CD4-positive, alpha-beta T cell (primary cell): ENCODE measurements at regions of chr11 and their contacts with region 1.

Region 1: GRCh38 chr11:9265211-9266131 is at the start of gene DENND5A:
- DNase-seq: peak; percentile 18 to 82 (median 50)
- ATAC-seq: peak; percentile 52
- H3K4me3 ChIP-seq: peak within 1 kb of the TSS; percentile 91
- H3K4me3 Mint-ChIP-seq: peak within 1 kb of the TSS; percentile 98
- H3K27ac ChIP-seq: peak within 1 kb of the TSS; percentile 77
- H3K27ac Mint-ChIP-seq: peak within 1 kb of the TSS; percentile 95
- H3K4me1 ChIP-seq: peaks cover 32% of the 10 kb centered on the region
- H3K4me1 Mint-ChIP-seq: peaks cover 35% of the 10 kb centered on the region
- H3K27me3 ChIP-seq: no peaks in the 10 kb centered on the region
- H3K27me3 Mint-ChIP-seq: no peaks in the 10 kb centered on the region
- CTCF ChIP-seq: no peak
- total RNA-seq, gene DENND5A: 101 to 103 TPM

Region 2: GRCh38 chr11:9203691-9204311 is 61.7 kb before region 1 on chr11:
- CTCF ChIA-PET with region 1: no interaction called
- POLR2A ChIA-PET with region 1: no interaction called
- intact Hi-C with region 1: loop called in 1 of 2 experiments (anchors 5 kb)
- DNase-seq: peak in 9 of 14 experiments; percentile 1 to 59 (median 9)
- ATAC-seq: peak; percentile 77
- H3K4me3 ChIP-seq: no peak overlapping the region
- H3K4me3 Mint-ChIP-seq: no peak overlapping the region
- H3K27ac ChIP-seq: no peak overlapping the region
- H3K27ac Mint-ChIP-seq: no peak overlapping the region
- H3K4me1 ChIP-seq: no peaks in the 10 kb centered on the region
- H3K4me1 Mint-ChIP-seq: peaks cover 26% of the 10 kb centered on the region
- H3K27me3 ChIP-seq: no peaks in the 10 kb centered on the region
- H3K27me3 Mint-ChIP-seq: no peaks in the 10 kb centered on the region
- CTCF ChIP-seq: peak; percentile 49

Region 3: GRCh38 chr11:9210922-9211320 is 54.5 kb before region 1 on chr11:
- CTCF ChIA-PET with region 1: no interaction called
- POLR2A ChIA-PET with region 1: no interaction called
- intact Hi-C with region 1: loop called (anchors 5 kb)
- DNase-seq: peak in 2 of 14 experiments; percentile 28 to 33
- ATAC-seq: no peak
- H3K4me3 ChIP-seq: no peak overlapping the region
- H3K4me3 Mint-ChIP-seq: no peak overlapping the region
- H3K27ac ChIP-seq: no peak overlapping the region
- H3K27ac Mint-ChIP-seq: no peak overlapping the region
- H3K4me1 ChIP-seq: peaks cover 13% of the 10 kb centered on the region
- H3K4me1 Mint-ChIP-seq: peaks cover 74% of the 10 kb centered on the region
- H3K27me3 ChIP-seq: no peaks in the 10 kb centered on the region
- H3K27me3 Mint-ChIP-seq: no peaks in the 10 kb centered on the region
- CTCF ChIP-seq: no peak

Region 4: GRCh38 chr11:9228066-9228465 is 37.4 kb before region 1 on chr11:
- CTCF ChIA-PET with region 1: no interaction called
- POLR2A ChIA-PET with region 1: interaction called, 5 read pairs
- intact Hi-C with region 1: loop called in 1 of 2 experiments (anchors 5 kb)
- DNase-seq: no peak
- ATAC-seq: no peak
- H3K4me3 ChIP-seq: no peak overlapping the region
- H3K4me3 Mint-ChIP-seq: no peak overlapping the region
- H3K27ac ChIP-seq: no peak overlapping the region
- H3K27ac Mint-ChIP-seq: no peak overlapping the region
- H3K4me1 ChIP-seq: peaks cover 16% of the 10 kb centered on the region
- H3K4me1 Mint-ChIP-seq: peaks cover 53% of the 10 kb centered on the region
- H3K27me3 ChIP-seq: no peaks in the 10 kb centered on the region
- H3K27me3 Mint-ChIP-seq: no peaks in the 10 kb centered on the region
- CTCF ChIP-seq: no peak

Region 5: GRCh38 chr11:9250139-9250582 is 15.3 kb before region 1 on chr11:
- CTCF ChIA-PET with region 1: interaction called, 3 read pairs
- POLR2A ChIA-PET with region 1: interaction called, 33 read pairs
- intact Hi-C with region 1: loop called (anchors 1 to 2 kb)
- DNase-seq: peak in 10 of 14 experiments; percentile 3 to 82 (median 38)
- ATAC-seq: peak; percentile 89
- H3K4me3 ChIP-seq: no peak overlapping the region
- H3K4me3 Mint-ChIP-seq: peak overlapping the region; percentile 64
- H3K27ac ChIP-seq: peak overlapping the region in 1 of 2 donors; percentile 25
- H3K27ac Mint-ChIP-seq: peak overlapping the region; percentile 72
- H3K4me1 ChIP-seq: peaks cover 67% of the 10 kb centered on the region
- H3K4me1 Mint-ChIP-seq: peaks cover 73% of the 10 kb centered on the region
- H3K27me3 ChIP-seq: no peaks in the 10 kb centered on the region
- H3K27me3 Mint-ChIP-seq: no peaks in the 10 kb centered on the region
- CTCF ChIP-seq: no peak

Region 6: GRCh38 chr11:9280655-9281301 is 15.3 kb after region 1 on chr11:
- CTCF ChIA-PET with region 1: interaction called, 4 read pairs
- POLR2A ChIA-PET with region 1: interaction called, 22 read pairs
- intact Hi-C with region 1: loop called in 1 of 2 experiments (anchors 2 kb)
- DNase-seq: peak in 13 of 14 experiments; percentile 27 to 85 (median 42)
- ATAC-seq: peak; percentile 92
- H3K4me3 ChIP-seq: peak overlapping the region; percentile 23
- H3K4me3 Mint-ChIP-seq: peak overlapping the region; percentile 67
- H3K27ac ChIP-seq: peak overlapping the region in 1 of 2 donors; percentile 29
- H3K27ac Mint-ChIP-seq: peak overlapping the region; percentile 72
- H3K4me1 ChIP-seq: peaks cover 13% of the 10 kb centered on the region
- H3K4me1 Mint-ChIP-seq: peaks cover 18% of the 10 kb centered on the region
- H3K27me3 ChIP-seq: no peaks in the 10 kb centered on the region
- H3K27me3 Mint-ChIP-seq: no peaks in the 10 kb centered on the region
- CTCF ChIP-seq: no peak

Region 7: GRCh38 chr11:9384535-9385303 is 119.2 kb after region 1 on chr11 and contains the start of gene IPO7:
- CTCF ChIA-PET with region 1: no interaction called
- POLR2A ChIA-PET with region 1: interaction called, 11 read pairs
- intact Hi-C with region 1: loop called in 1 of 2 experiments (anchors 10 kb)
- DNase-seq: peak; percentile 72 to 93 (median 84)
- ATAC-seq: peak; percentile 98
- H3K4me3 ChIP-seq: peak within 1 kb of the TSS; percentile 82
- H3K4me3 Mint-ChIP-seq: peak within 1 kb of the TSS; percentile 96
- H3K27ac ChIP-seq: peak within 1 kb of the TSS; percentile 69 to 78
- H3K27ac Mint-ChIP-seq: peak within 1 kb of the TSS; percentile 80
- H3K4me1 ChIP-seq: peaks cover 29% of the 10 kb centered on the region
- H3K4me1 Mint-ChIP-seq: peaks cover 42% of the 10 kb centered on the region
- H3K27me3 ChIP-seq: no peaks in the 10 kb centered on the region
- H3K27me3 Mint-ChIP-seq: no peaks in the 10 kb centered on the region
- CTCF ChIP-seq: no peak
- total RNA-seq, gene IPO7: 40.7 to 51.6 TPM

Region 8: DNA sequence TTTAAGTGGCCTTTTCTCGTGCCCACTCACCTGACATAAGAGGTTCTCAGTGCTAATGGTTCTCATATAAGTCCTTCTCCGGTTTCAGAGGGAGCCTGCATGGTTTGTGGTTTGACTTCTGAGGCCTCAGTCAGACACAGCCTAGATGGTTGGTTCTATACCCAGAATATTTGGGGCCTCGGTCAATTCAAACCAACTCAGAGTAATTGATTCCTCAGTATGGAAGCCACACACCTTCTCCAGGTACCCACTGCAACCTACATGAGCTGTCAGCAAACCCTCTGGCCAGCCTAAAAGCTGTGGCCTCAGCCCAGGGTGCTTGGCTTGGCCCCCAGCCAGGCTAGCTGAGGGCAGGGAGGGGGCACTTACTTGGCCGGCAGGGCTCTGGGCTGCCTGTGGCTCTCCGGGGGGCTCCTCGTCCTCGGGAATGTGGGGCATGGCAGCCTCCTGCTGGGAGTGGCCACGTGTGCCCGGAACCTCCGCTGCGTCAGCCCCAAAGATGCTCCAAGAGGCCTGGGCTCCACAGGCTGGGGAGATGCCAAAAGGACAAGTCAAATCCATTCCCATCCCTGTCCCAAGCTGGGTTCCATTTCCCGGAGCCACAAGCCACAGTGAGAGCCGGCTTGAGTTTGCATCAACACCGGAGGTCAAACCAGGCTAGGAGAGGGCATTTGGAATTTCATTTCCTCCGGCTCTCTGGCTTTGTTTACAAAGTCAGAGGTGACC is 1386.3 kb after region 1 on chr11:
- CTCF ChIA-PET with region 1: no interaction called
- POLR2A ChIA-PET with region 1: no interaction called
- intact Hi-C with region 1: no loop called
- DNase-seq: no peak
- ATAC-seq: no peak
- H3K4me3 ChIP-seq: no peak overlapping the region
- H3K4me3 Mint-ChIP-seq: no peak overlapping the region
- H3K27ac ChIP-seq: no peak overlapping the region
- H3K27ac Mint-ChIP-seq: no peak overlapping the region
- H3K4me1 ChIP-seq: no peaks in the 10 kb centered on the region
- H3K4me1 Mint-ChIP-seq: no peaks in the 10 kb centered on the region
- H3K27me3 ChIP-seq: no peaks in the 10 kb centered on the region
- H3K27me3 Mint-ChIP-seq: no peaks in the 10 kb centered on the region
- CTCF ChIP-seq: no peak